Ascending aorta (tissue), 2 donors: ENCODE measurements at regions of chr16 and their contacts with region 1.

Region 1: GRCh38 chr16:21277927-21278706 is at the start of gene CRYM:
- DNase-seq: peak in 1 of 2 donors; percentile 70
- H3K4me3 ChIP-seq: peak within 1 kb of the TSS; percentile 56 to 62
- H3K27ac ChIP-seq: peak within 1 kb of the TSS in 1 of 2 donors; percentile 24
- H3K4me1 ChIP-seq: no peaks in the 10 kb centered on the region
- H3K27me3 ChIP-seq: no peaks in the 10 kb centered on the region
- CTCF ChIP-seq: peak; percentile 65 to 91 (median 85)
- total RNA-seq, gene CRYM: not detected

Region 2: DNA sequence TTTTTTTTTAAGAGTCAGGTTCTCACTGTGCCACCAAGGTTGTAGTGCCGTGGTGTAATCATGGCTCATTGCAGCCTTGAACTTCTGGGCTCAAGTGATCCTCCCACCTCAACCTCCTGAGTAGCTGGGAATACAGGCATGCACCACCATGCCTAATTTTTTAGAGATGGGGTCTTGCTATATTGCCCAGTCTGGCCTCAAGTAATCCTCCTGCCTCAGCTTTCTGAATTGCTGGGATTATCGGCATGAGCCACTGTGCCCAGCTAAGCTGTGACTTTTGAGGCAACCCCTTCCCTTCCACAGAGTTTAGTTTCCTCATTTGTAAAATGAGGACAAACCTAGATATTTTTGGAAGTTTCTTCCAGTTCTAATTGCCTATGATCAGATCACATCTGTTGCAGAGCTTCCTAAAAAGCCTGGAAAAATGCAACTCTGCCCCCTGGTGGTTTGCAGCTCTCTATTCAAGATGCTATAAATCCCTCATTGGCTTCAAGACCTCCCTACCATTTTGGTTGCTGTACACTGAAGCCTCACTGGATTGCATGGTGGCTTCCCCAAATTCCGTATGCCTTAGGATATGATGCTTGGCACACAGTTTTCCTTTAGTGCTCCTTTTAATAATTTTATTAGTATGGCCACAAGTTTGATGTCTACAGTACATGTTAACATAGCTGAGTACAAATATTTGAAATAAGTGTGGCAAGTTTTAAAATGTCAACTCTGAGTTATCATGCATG is 1775.6 kb before region 1 on chr16:
- intact Hi-C with region 1: no loop called
- DNase-seq: peak in 1 of 2 donors; percentile 65
- H3K4me3 ChIP-seq: no peak overlapping the region
- H3K27ac ChIP-seq: no peak overlapping the region
- H3K4me1 ChIP-seq: no peaks in the 10 kb centered on the region
- H3K27me3 ChIP-seq: no peaks in the 10 kb centered on the region
- CTCF ChIP-seq: peak; percentile 40 to 72 (median 59)

Region 3: DNA sequence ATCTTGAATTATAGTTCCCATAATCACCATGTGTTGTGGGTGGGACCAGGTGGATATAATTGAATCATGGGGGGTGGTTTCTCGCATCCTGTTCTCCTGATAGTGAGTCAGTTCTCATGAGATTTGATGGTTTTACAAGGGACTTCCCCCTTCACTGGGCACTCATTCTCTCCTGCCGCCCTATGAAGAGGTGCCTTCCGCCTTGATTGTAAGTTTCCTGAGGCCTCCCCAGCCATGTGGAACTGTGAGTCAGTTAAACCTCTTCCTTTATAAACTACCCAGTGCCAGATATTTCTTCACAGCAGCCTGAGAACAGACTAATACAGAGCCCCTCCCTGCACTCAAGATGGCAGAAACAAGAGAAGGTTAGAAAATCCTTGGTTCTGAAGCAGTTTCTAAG is 93.3 kb before region 1 on chr16:
- intact Hi-C with region 1: loop called (anchors 1 kb)
- DNase-seq: no peak
- H3K4me3 ChIP-seq: no peak overlapping the region
- H3K27ac ChIP-seq: no peak overlapping the region
- H3K4me1 ChIP-seq: peaks cover 0 to 9% of the 10 kb centered on the region in 2 donors
- H3K27me3 ChIP-seq: no peaks in the 10 kb centered on the region
- CTCF ChIP-seq: no peak

Region 4: GRCh38 chr16:21321736-21322135 is 43.6 kb after region 1 on chr16:
- intact Hi-C with region 1: no loop called
- DNase-seq: no peak
- H3K4me3 ChIP-seq: no peak overlapping the region
- H3K27ac ChIP-seq: no peak overlapping the region
- H3K4me1 ChIP-seq: no peaks in the 10 kb centered on the region
- H3K27me3 ChIP-seq: no peaks in the 10 kb centered on the region
- CTCF ChIP-seq: no peak